Calu3 (cell line): ENCODE measurements at regions of chr15 and their contacts with region 1.

Region 1: DNA sequence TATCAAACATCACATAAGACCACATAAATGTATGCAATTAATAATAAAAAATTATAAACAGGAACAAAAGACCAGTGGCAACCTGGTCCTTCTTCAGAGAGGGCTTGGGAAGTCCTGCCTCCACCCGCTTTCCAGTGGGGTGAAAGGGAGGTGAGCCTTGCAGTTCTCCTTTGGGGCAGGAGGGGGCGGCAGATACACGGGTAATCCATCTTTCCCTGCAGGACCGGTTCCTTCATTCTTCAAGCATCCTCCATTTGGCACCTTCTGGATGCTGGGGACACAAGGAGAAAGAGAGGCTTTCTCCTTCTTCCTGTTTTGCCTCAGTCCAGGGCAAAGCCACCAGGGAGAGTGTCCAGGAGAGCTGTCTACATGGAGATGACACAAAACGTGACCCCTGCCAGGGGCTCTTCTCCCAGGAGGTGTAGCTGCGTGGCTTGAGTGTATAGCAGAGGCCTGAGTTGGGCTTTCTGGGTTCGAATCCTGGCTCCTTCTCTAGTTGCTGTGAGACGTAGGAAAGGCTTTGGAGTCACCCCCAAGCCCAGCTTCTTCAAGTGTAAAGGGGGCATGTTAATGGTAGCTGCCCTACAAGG is 23.2 kb downstream of the RPLP1 start:
- DNase-seq: peak; percentile 93
- H3K4me3 Mint-ChIP-seq: no peak overlapping the region
- H3K27ac Mint-ChIP-seq: no peak overlapping the region
- H3K4me1 Mint-ChIP-seq: peaks cover 25% of the 10 kb centered on the region
- H3K27me3 Mint-ChIP-seq: no peaks in the 10 kb centered on the region
- CTCF ChIP-seq: peak; percentile 97

Region 2: GRCh38 chr15:69576035-69576526 is 100.2 kb after region 1 on chr15:
- CTCF ChIA-PET with region 1: interaction called, 12 read pairs
- intact Hi-C with region 1: loop called (anchors 5 kb)
- DNase-seq: peak; percentile 88
- H3K4me3 Mint-ChIP-seq: no peak overlapping the region
- H3K27ac Mint-ChIP-seq: no peak overlapping the region
- H3K4me1 Mint-ChIP-seq: peaks cover 31% of the 10 kb centered on the region
- H3K27me3 Mint-ChIP-seq: peaks cover 71% of the 10 kb centered on the region
- CTCF ChIP-seq: peak; percentile 89

Region 3: DNA sequence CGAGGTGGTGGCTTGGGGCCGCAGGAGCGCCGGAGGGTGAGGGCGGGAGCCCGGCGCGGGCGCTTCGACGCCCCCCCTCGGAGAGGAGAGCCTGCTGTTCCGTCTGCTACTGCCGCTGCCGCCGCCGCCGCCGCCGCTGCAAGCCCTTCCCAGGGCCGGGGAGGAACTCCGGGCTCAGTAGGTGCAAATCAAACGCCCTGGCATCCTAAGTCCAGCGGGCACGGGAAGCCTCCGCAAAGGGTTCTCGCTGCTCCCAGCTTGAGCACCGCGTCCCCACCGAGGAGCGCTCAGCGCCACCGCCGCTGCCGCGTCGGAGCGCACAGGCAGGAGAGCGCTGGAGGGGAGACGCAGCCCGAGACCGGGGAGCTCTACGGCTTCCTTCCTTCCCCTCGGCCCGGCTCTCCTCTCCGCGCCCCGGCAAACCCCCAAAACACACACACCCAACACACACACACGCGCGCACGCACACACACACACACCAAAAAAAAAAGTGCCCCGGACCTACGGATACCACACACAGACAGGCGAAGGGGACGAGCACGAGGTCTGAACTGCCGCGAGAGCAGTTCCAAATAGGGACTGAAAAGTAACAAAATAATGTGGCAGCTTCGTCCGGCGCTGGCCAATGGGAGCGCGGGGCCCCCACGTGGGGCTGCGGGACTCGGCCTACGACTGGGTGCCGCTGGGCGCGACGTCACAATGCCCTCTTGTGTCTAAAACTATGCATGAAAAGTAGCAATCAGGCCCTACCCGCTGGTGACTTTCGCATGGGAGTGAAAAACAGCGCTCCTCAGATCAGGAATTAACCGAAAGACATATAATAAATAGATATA is 621.7 kb after region 1 on chr15 and contains the start of gene TLE3:
- CTCF ChIA-PET with region 1: interaction called, 5 read pairs
- intact Hi-C with region 1: loop called (anchors 5 kb)
- DNase-seq: peak; percentile 99
- H3K4me3 Mint-ChIP-seq: peak within 1 kb of the TSS; percentile 97
- H3K27ac Mint-ChIP-seq: peak within 1 kb of the TSS; percentile 96
- H3K4me1 Mint-ChIP-seq: peaks cover 48% of the 10 kb centered on the region
- H3K27me3 Mint-ChIP-seq: peaks cover 2% of the 10 kb centered on the region
- CTCF ChIP-seq: no peak
- total RNA-seq, gene TLE3: 53.5 and 54.8 TPM in 2 replicates

Region 4: GRCh38 chr15:70362886-70363285 is 887.0 kb after region 1 on chr15:
- CTCF ChIA-PET with region 1: interaction called, 5 read pairs
- intact Hi-C with region 1: loop called (anchors 5 kb)
- DNase-seq: peak; percentile 71
- H3K4me3 Mint-ChIP-seq: no peak overlapping the region
- H3K27ac Mint-ChIP-seq: no peak overlapping the region
- H3K4me1 Mint-ChIP-seq: no peaks in the 10 kb centered on the region
- H3K27me3 Mint-ChIP-seq: peaks cover 39% of the 10 kb centered on the region
- CTCF ChIP-seq: peak; percentile 67

Region 5: GRCh38 chr15:70488002-70488605 is 1012.2 kb after region 1 on chr15:
- CTCF ChIA-PET with region 1: interaction called, 5 read pairs
- intact Hi-C with region 1: loop called (anchors 5 kb)
- DNase-seq: peak; percentile 86
- H3K4me3 Mint-ChIP-seq: no peak overlapping the region
- H3K27ac Mint-ChIP-seq: no peak overlapping the region
- H3K4me1 Mint-ChIP-seq: peaks cover 45% of the 10 kb centered on the region
- H3K27me3 Mint-ChIP-seq: peaks cover 4% of the 10 kb centered on the region
- CTCF ChIP-seq: peak; percentile 95